ENCODE measurements at regions of chr9 and their contacts with region 1.

Region 1: DNA sequence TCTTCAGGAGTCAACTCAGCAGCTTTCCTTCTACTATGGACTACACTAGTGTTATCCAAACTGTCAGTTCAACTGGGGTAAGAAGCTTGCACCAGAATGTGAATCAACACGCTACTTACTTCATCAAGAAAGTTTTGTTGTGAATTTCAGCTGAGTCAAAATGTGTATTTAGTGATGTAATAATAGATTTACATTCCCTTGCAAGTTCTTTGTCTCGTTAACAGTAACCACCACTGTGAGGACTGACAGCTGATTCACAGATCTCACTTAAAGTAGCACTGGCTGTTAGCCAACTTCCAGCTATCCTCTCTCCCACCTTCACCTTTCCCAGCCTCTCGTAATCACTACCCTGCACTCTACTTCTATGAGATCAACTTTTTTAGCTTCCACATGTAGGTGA is 445.3 kb downstream of the NTRK2 start:
- DNase-seq: no peak
- ATAC-seq: no peak
- H3K4me3 ChIP-seq: no peak overlapping the region
- H3K4me1 ChIP-seq: no peaks in the 10 kb centered on the region
- CTCF ChIP-seq: no peak

Region 2: DNA sequence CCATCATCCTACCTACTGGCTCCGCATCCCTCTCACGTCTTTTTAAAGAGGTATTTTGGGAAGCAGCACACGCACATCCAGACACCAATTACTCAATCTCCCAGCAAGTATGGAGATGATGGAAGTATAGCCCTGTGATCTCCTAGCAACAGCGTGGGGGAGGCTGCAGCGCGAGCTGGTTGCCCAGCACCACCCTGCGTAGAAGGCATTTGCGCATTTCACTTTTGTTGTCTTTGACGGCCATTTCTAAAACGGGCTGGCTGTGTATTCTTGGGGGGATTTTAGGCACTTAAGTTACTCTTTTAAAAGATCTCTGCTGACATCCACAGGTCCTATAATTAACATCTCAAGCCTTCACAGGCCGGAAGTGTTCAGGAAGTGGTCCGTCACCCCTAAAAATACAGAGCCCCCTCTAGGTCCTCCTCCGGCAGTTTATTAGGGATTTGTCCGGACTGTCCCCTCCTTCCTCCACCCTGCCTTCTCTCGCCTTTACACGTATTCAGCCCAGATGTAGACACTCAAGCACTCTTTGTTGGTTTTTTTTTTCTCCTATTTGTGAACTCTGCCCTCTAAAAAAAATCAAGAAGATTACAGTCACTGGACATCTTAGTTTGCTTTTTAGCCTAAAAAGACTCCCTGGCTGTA is 73.9 kb before region 1 on chr9:
- intact Hi-C with region 1: loop called in 1 of 2 experiments (anchors 5 kb)
- DNase-seq: no peak
- ATAC-seq: no peak
- H3K4me3 ChIP-seq: no peak overlapping the region
- H3K4me1 ChIP-seq: peaks cover 4% of the 10 kb centered on the region
- CTCF ChIP-seq: no peak